ENCODE measurements at regions of chr10 and their contacts with region 1.

Region 1: GRCh38 chr10:66234872-66235271 is 691.0 kb upstream of the LRRTM3 start:
- DNase-seq: no peak

Region 2: GRCh38 chr10:65149878-65150277 is 1085.0 kb before region 1 on chr10:
- intact Hi-C with region 1: loop called in 1 of 2 experiments (anchors 5 kb)
- DNase-seq: no peak

Region 3: GRCh38 chr10:66095610-66096009 is 139.3 kb before region 1 on chr10:
- intact Hi-C with region 1: no loop called
- DNase-seq: no peak

Region 4: DNA sequence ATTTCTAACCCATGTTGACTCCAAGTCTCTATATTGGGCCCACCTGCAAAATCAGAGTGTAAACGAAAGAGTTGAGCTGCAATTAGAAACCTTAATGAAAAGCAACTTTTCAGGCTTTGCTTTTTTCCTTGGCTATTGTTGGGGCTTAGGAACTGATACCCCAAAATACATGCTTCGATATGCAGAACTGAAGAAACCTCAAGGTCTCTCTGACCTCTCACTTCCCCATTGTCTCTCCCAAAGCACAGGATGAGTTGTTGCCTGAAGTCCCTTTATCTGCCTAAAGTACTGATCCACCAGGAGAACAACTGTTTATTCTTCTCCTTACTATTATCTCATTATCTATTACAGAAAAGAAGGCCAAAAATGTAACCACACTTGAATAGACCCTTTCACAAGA is 25.0 kb after region 1 on chr10:
- intact Hi-C with region 1: loop called in 1 of 2 experiments (anchors 1 kb)
- DNase-seq: no peak

Region 5: GRCh38 chr10:66307826-66308225 is 73.0 kb after region 1 on chr10:
- intact Hi-C with region 1: no loop called
- DNase-seq: no peak